Dorsolateral prefrontal cortex (tissue), 120 donors: ENCODE measurements at regions of chr15 and their contacts with region 1.

Region 1: GRCh38 chr15:46312133-46312740 is 677.4 kb downstream of the SQOR start:
- DNase-seq: peak in 9 of 10 donors; percentile 42 to 82 (median 70)
- H3K4me3 ChIP-seq: no peak overlapping the region
- H3K27ac ChIP-seq: no peak overlapping the region
- H3K27me3 ChIP-seq: peaks cover 0 to 6% (median 0%) of the 10 kb centered on the region in 45 donors
- CTCF ChIP-seq: peak; percentile 51 to 94 (median 85)

Region 2: DNA sequence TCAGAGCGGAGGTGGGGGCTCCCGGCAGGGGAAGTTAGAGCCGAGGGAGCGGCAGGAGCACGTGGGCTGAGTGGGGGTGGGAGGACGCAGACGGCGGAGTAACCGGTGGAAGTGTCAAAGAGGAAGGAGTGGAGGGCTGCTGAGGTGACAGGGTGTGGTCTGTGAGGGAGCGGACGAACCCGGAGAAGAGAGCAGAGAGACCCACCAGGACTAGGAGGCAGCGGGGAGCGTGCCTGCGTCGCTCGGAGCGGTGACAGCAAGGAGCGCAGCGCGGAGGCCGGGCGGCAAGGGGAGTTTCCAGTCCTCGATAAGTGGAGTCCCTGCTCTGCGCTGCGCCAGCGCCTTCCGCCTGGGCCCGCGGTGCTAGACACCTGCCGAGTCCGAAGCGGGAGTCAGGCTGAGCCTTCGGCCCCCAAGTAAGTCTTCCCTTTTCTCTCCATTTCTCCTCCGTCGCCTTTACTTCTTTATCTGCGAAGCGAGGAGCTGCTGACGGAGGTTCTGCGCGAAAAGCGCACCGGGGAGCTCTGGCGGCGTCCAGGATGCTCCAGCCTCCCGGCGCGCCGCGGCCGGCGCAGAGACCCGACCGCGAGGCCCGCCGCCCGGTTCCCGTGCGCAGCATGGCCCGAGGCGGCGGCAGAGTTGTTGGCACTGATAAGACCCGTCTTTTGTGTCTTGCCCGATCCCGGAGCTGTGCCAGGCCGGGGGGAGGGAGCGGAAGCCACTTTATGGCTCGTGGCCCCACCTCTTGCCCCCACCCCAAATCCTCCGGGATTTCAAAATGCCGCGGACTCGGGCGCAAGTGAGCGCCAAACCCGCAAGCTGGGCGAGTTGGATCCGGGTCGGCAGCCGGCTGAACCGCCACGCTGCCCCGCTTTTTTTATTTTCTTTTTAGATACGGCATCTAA is 872.0 kb after region 1 on chr15:
- intact Hi-C with region 1: loop called in 1 of 2 experiments (anchors 10 kb)
- DNase-seq: peak in 8 of 10 donors; percentile 21 to 59 (median 52)
- H3K4me3 ChIP-seq: peak overlapping the region; percentile 36 to 78 (median 63)
- H3K27ac ChIP-seq: peak overlapping the region in 13 of 59 donors; percentile 5 to 54 (median 36)
- H3K27me3 ChIP-seq: peaks cover 0 to 49% (median 10%) of the 10 kb centered on the region in 45 donors
- CTCF ChIP-seq: no peak

Region 3: DNA sequence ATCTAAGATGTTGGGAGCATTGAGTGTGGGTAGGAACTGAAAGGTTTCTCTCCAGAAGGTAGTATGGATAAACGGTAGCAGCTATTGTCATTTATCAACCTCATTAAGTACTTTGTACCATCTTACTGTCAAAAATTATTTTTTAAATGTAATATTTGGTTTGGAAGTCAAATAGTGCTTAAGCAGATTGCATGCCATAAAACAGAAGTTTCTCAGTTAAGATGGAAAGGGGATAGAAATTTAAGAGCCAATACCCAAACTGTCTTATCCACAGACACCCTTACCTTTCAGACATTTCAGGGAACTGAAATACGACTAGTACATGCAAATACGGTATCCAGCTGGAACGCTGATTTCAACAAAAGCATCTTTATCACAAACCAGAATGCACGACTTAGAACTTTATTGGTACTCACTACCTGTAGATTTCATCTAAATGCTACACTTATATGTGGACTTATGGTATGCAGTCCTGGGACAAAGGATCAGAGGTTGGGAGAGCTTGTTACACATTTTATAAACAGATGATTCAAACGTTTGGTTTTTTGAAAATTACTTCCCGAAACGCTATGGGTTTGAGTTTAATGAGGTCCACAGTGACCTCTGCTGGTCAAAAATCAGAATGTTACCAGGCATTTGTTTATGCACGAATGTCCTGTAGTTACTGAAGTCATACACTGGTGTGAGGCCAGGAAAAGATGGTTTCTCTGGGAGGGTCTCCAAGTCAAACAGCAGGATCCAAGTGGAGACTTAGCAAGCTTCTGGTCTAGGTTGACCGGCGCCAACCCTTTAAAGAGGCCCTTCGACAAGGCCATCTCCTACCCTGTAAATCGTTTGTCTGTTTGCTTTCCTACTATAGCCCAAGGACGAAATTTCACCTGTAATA is 1973.3 kb after region 1 on chr15:
- intact Hi-C with region 1: loop called in 1 of 2 experiments (anchors 10 kb)
- DNase-seq: peak in 4 of 10 donors; percentile 10 to 53 (median 41)
- H3K4me3 ChIP-seq: peak overlapping the region in 57 of 59 donors; percentile 3 to 68 (median 49)
- H3K27ac ChIP-seq: peak overlapping the region in 1 of 59 donors; percentile 30
- H3K27me3 ChIP-seq: no peaks in the 10 kb centered on the region
- CTCF ChIP-seq: peak; percentile 62 to 95 (median 82)